ENCODE measurements at regions of chr9 and their contacts with region 1.

Region 1: DNA sequence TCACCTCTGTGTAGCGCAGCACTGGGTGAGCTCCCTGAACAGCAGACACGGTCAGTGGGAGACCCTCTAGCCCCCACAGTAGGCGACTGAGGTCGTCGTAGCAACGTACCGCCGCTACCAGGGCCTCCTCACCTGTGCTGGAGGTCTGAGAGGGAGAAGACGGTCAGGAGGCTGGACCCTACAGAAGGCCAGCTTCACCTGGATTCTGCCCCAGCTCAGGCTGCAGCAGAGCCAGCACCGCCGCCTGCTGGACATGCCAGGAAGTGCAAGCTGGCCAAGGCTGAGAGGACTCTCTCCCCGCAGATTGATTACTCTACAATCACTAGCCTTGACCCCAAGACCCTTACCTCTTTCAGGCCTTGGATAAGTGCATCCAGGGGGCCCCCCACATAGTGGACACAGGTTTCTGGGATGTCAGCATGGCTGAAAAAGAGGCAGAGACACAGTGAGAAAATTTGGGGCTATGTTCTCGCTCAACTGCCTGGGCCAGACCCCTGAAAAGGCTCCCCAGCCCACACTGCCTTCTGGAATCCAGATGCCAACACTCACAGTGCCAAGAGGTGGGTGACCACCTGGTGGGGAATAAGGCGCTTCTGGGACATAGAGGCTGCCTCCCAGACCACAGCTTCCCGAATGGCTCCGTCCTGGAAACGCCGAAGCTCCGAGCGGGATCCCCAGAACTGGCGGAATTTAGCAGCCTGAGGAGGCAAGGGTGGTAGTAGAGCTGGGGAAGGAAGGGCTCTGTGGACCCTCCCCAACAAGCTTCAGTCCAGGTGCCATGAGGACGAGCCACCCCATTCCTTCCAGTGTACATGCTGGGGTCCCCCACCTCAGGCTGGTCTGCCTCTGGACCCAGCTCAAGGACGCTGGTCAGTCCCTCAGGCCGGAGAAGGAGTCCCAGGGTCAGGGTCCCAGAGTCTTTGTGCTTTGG is 6.9 kb downstream of the NOL6 start:
- DNase-seq: peak; percentile 59 to 60
- H3K4me3 ChIP-seq: no peak overlapping the region
- H3K27ac ChIP-seq: no peak overlapping the region
- H3K4me1 ChIP-seq: no peaks in the 10 kb centered on the region
- H3K27me3 ChIP-seq: no peaks in the 10 kb centered on the region
- CTCF ChIP-seq: peak; percentile 79 to 95 (median 82)
- POLR2A ChIP-seq: no peak

Region 2: DNA sequence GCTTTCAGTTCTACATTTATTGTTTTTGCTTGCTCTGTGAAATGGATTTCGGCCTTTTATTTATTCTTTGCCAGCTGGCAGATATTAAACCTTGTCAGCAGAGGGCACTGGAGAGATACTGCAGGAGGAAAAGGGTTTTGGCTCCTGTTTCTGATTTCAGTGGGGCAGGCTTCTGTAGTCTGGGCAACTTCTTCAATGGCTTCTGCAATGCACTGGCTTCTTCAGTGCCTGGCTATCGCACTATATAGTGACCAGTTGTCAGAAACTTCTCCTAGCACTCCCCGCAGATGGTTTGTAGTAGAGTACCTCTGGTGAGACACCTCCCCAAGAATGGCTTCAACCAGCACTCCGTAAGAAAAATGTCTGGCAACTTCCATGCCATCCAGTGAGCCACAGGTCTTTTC is 179.7 kb before region 1 on chr9:
- intact Hi-C with region 1: loop called (anchors 10 kb)
- DNase-seq: peak; percentile 44 to 58
- H3K4me3 ChIP-seq: no peak overlapping the region
- H3K27ac ChIP-seq: peak overlapping the region; percentile 9 to 43 (median 14)
- H3K4me1 ChIP-seq: peaks cover 16 to 18% of the 10 kb centered on the region in 2 donors
- H3K27me3 ChIP-seq: no peaks in the 10 kb centered on the region
- CTCF ChIP-seq: peak; percentile 40 to 81 (median 78)
- POLR2A ChIP-seq: no peak

Region 3: GRCh38 chr9:33374634-33375213 is 92.1 kb before region 1 on chr9:
- intact Hi-C with region 1: loop called (anchors 5 kb)
- DNase-seq: peak; percentile 80 to 83
- H3K4me3 ChIP-seq: no peak overlapping the region
- H3K27ac ChIP-seq: no peak overlapping the region
- H3K4me1 ChIP-seq: peaks cover 9% of the 10 kb centered on the region in 2 donors
- H3K27me3 ChIP-seq: no peaks in the 10 kb centered on the region
- CTCF ChIP-seq: peak; percentile 58 to 90 (median 82)
- POLR2A ChIP-seq: no peak

Region 4: GRCh38 chr9:33404788-33405362 is 62.0 kb before region 1 on chr9:
- intact Hi-C with region 1: loop called (anchors 2 kb)
- DNase-seq: no peak
- H3K4me3 ChIP-seq: no peak overlapping the region
- H3K27ac ChIP-seq: no peak overlapping the region
- H3K4me1 ChIP-seq: peaks cover 0 to 7% of the 10 kb centered on the region in 2 donors
- H3K27me3 ChIP-seq: no peaks in the 10 kb centered on the region
- CTCF ChIP-seq: no peak
- POLR2A ChIP-seq: no peak

Measured in thyroid gland (tissue), 4 donors.